ENCODE measurements at regions of chr1 and their contacts with region 1.

Region 1: DNA sequence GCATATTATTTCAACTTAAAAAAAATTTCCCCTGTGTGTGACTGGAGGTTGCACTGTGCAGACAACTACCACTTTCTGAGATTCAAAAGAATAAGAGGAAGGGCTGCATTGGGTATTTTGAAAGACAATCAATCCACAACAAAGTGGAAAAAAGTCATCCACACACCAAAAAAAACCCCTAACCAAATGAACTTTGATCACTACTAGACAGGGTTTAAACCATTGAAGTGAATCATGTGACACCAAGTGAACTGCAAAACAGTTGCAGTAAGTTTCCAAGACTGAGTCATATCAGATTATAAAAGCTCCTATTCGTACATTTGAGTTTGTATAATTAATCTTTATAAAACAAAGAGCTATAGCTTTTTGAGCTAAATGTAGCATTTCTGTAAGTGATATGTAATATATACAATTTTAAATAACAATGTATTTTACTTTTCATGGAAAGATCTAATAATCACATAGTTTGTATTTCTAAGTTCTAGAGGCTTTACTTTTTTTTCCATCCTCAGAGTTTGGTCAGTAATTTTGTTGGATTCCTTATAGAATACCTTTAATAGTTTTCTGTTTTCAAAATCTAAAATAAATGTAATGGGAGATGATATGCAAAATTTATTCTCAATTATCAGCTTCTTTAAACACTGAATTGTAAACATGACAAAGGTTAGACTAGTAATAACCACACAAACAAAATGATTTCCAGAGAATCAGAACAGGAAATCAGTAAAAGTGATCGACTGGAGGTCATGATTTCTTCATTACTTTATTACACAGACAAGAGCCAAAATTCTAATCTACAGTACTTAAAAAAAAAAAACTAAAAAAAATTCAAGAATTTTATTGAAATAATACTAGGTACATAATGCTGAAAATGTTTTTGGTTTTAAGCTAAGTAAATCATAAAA is 50.5 kb upstream of the GFI1 start:
- DNase-seq: peak; percentile 30
- H3K4me3 Mint-ChIP-seq: peak overlapping the region; percentile 57
- H3K27ac Mint-ChIP-seq: peak overlapping the region; percentile 88
- H3K4me1 Mint-ChIP-seq: peaks cover 83% of the 10 kb centered on the region
- H3K27me3 Mint-ChIP-seq: no peaks in the 10 kb centered on the region

Region 2: GRCh38 chr1:91803847-91804545 is 733.2 kb before region 1 on chr1:
- CTCF ChIA-PET with region 1: no interaction called
- intact Hi-C with region 1: loop called (anchors 1 kb)
- DNase-seq: peak; percentile 92
- H3K4me3 Mint-ChIP-seq: peak overlapping the region; percentile 60
- H3K27ac Mint-ChIP-seq: peak overlapping the region; percentile 98
- H3K4me1 Mint-ChIP-seq: peaks cover 31% of the 10 kb centered on the region
- H3K27me3 Mint-ChIP-seq: no peaks in the 10 kb centered on the region

Region 3: GRCh38 chr1:92317836-92318493 is 219.3 kb before region 1 on chr1:
- CTCF ChIA-PET with region 1: interaction called, 3 read pairs
- intact Hi-C with region 1: loop called (anchors 1 kb)
- DNase-seq: no peak
- H3K4me3 Mint-ChIP-seq: no peak overlapping the region
- H3K27ac Mint-ChIP-seq: no peak overlapping the region
- H3K4me1 Mint-ChIP-seq: peaks cover 55% of the 10 kb centered on the region
- H3K27me3 Mint-ChIP-seq: no peaks in the 10 kb centered on the region

Region 4: DNA sequence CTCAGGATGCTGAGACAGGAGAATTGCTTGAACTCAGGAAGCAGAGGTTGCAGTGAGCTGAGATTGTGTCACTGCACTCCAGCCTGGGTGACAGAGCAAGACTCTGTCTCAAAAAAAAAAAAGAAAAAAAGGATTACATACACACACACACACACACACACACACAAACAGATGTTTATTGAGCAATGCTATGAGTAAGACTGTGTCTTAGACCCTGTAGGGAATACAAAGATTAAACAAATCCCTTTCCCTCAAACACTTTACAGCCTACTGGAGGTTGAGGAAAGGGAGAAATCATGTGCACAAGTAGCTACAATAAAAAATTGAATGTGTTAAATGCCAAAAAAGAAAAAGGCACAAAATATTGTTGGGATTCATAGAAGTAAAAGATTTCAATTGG is 180.3 kb before region 1 on chr1:
- CTCF ChIA-PET with region 1: no interaction called
- intact Hi-C with region 1: no loop called
- DNase-seq: no peak
- H3K4me3 Mint-ChIP-seq: no peak overlapping the region
- H3K27ac Mint-ChIP-seq: no peak overlapping the region
- H3K4me1 Mint-ChIP-seq: no peaks in the 10 kb centered on the region
- H3K27me3 Mint-ChIP-seq: no peaks in the 10 kb centered on the region

Region 5: DNA sequence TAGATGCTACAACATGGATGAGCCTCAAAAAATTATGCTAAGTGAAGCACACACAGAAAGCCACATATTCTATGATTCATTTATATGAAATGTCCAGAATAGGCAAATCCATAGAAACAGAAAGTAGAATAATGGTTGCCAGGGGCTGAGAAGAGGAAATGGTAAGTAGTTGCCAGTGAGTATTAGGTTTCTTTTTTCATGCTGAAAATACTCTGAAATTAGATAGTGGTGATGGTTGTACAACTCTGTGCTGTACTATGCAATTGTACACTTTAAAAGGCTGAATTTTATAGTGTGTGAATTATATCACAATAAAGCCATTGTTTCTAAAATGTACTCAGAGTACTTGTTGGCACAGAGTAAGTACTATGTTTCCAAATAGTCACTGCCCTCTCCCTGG is 35.0 kb before region 1 on chr1:
- CTCF ChIA-PET with region 1: interaction called, 3 read pairs
- intact Hi-C with region 1: loop called (anchors 1 kb)
- DNase-seq: no peak
- H3K4me3 Mint-ChIP-seq: no peak overlapping the region
- H3K27ac Mint-ChIP-seq: peak overlapping the region; percentile 46
- H3K4me1 Mint-ChIP-seq: peaks cover 35% of the 10 kb centered on the region
- H3K27me3 Mint-ChIP-seq: no peaks in the 10 kb centered on the region

Region 6: GRCh38 chr1:92583821-92584760 is 46.9 kb after region 1 on chr1:
- CTCF ChIA-PET with region 1: interaction called, 17 read pairs
- intact Hi-C with region 1: loop called (anchors 1 kb)
- DNase-seq: no peak
- H3K4me3 Mint-ChIP-seq: peak overlapping the region; percentile 45
- H3K27ac Mint-ChIP-seq: peak overlapping the region; percentile 88
- H3K4me1 Mint-ChIP-seq: peaks cover 72% of the 10 kb centered on the region
- H3K27me3 Mint-ChIP-seq: no peaks in the 10 kb centered on the region

Region 7: DNA sequence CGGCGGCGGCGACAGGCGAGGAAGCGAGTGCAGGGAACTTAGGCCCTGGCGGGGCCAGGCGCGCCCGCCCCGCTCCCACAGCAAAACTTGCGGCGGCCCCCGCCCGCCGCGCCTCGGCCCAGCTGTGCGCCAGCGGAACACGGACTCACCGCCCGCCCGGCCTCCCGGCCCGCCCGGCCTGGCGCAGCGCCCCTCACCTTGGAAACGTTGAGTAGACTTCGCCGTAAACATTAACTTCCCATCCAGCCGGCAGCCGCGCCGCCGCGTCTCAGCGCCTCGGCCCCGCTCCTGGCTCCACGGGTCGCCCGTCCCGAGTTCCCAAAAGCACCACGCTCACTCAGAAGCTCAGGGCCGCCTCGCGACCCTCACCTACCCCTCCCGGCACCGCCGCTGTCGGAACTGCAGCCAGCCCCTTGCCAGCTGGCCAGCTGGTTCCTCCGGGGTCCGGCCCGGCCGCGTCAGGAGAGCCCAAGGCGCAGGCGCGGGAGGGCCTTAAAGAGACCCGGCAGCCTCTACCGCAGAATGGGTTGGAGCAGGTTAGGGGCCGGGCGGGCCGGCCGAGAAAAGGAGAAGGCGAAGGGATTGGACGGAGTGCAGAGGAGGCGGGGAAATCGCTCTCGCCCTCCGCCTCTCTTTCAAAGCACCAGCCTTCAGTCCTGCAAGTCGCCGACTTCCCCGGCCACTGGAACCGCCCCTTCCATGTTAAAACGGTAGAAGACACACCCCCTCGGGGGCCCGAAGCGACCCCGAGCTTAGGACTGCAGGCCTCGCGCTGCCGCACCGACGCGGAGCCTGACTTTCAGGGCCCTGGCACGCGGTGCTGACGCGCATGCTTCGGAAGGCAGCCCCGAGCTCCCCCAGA is 247.6 kb after region 1 on chr1 and contains the start of gene EVI5:
- CTCF ChIA-PET with region 1: no interaction called
- intact Hi-C with region 1: loop called (anchors 1 kb)
- DNase-seq: peak; percentile 58
- H3K4me3 Mint-ChIP-seq: peak within 1 kb of the TSS; percentile 73
- H3K27ac Mint-ChIP-seq: no peak within 1 kb of the TSS
- H3K4me1 Mint-ChIP-seq: peaks cover 13% of the 10 kb centered on the region
- H3K27me3 Mint-ChIP-seq: peaks cover 32% of the 10 kb centered on the region
- total RNA-seq, gene EVI5: 13.8 to 14.0 TPM

Region 8: GRCh38 chr1:92975551-92976232 is 438.5 kb after region 1 on chr1:
- CTCF ChIA-PET with region 1: no interaction called
- intact Hi-C with region 1: loop called (anchors 5 kb)
- DNase-seq: no peak
- H3K4me3 Mint-ChIP-seq: no peak overlapping the region
- H3K27ac Mint-ChIP-seq: peak overlapping the region; percentile 38
- H3K4me1 Mint-ChIP-seq: peaks cover 62% of the 10 kb centered on the region
- H3K27me3 Mint-ChIP-seq: no peaks in the 10 kb centered on the region

Measured in activated naive CD4-positive, alpha-beta T cell treated with anti-CD3 and anti-CD28 coated beads for 36 hours (primary cell).